Common myeloid progenitor, CD34-positive (primary cell): ENCODE measurements at regions of chr4 and their contacts with region 1.

Region 1: DNA sequence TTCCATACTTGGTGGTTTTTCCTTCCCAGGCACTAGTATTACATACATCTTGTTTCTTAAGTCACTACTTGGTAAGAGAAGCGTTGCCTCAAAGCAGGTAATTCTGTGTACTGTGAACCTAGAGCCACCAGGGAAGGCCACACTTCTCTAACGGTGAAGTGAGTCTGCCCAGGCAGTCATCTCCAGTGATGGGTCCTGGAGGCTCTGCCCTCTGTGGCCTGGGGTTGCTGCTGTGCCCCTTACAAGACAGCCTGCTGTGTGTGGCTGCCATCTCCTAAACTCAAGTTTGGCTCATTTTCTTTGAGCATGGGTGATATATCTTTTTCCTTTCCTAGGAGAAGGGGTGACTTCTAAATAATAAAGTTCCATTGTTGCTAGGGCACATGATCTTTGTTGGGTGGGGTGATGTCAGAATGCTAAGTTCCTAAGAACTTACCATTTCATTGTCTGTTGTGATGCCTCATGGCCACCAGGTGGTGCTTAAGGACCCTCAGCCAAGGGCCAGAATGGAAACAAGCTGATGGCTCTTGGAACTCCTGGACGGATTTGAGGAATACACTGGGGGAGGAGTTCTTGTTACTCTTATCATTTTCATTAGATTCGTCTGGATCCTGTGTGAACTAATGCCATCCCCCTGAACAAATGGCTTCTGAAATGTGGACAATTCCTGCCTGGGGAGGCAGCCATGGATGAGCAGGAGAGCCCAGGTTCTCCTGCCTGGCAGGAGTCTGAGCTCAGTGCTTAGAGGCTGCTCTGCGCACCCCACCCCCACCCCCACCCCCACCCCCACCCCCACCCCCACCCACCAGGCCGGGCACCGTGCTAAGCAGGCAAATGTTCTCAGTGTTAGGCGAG is 41.1 kb upstream of the WDR1 start:
- DNase-seq: peak; percentile 67 to 77 (median 75)
- H3K4me3 ChIP-seq: no peak overlapping the region
- H3K27ac ChIP-seq: no peak overlapping the region
- H3K4me1 ChIP-seq: peaks cover 0 to 7% (median 0%) of the 10 kb centered on the region in 4 experiments
- H3K27me3 ChIP-seq: no peaks in the 10 kb centered on the region

Region 2: GRCh38 chr4:10116580-10117358 is 40.9 kb before region 1 on chr4 and contains the start of gene WDR1:
- CTCF ChIA-PET with region 1: interaction called, 49 read pairs
- POLR2A ChIA-PET with region 1: interaction called, 3 read pairs
- DNase-seq: peak; percentile 88 to 96 (median 95)
- H3K4me3 ChIP-seq: peak within 1 kb of the TSS; percentile 72 to 89 (median 80)
- H3K27ac ChIP-seq: peak within 1 kb of the TSS; percentile 90 to 96
- H3K4me1 ChIP-seq: peaks cover 6 to 66% (median 52%) of the 10 kb centered on the region in 4 experiments
- H3K27me3 ChIP-seq: no peaks in the 10 kb centered on the region

Region 3: DNA sequence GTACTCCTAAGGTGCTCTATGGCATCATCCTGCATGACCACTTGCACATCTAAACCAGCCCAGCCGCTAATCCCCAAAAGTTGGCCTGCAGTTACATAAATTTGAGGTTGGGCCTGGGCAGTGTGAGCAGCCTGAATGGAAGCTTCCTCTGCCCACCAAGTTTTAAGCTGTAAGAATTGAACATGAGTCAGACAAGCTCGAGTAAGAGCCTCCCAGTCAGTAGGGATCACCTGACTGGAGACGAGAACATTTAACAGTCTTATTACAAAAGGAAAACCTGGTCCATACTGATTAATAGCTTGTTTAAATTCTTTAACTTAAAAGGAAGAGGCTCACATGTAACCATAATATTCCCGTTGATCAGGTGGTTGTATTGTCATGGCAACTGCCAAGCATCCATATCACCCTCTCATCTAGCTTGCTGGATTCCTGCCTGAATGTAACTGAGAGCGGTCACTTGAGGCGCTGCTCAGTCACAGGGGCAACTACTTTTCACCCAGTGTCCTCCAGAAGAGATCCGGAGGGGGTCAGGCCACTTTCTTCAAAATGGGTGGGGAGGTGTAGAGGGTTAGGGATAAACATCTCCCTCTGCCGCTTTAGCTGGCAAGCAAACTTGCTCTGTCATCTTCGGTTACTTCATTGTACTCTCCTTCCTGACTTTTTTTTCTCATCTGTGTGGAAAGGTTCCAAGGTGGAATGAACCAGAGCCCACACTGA is 15.5 kb after region 1 on chr4:
- CTCF ChIA-PET with region 1: interaction called, 177 read pairs
- POLR2A ChIA-PET with region 1: no interaction called
- DNase-seq: peak; percentile 77 to 91 (median 81)
- H3K4me3 ChIP-seq: no peak overlapping the region
- H3K27ac ChIP-seq: peak overlapping the region; percentile 1 to 75
- H3K4me1 ChIP-seq: peaks cover 0 to 29% (median 15%) of the 10 kb centered on the region in 4 experiments
- H3K27me3 ChIP-seq: no peaks in the 10 kb centered on the region

Region 4: DNA sequence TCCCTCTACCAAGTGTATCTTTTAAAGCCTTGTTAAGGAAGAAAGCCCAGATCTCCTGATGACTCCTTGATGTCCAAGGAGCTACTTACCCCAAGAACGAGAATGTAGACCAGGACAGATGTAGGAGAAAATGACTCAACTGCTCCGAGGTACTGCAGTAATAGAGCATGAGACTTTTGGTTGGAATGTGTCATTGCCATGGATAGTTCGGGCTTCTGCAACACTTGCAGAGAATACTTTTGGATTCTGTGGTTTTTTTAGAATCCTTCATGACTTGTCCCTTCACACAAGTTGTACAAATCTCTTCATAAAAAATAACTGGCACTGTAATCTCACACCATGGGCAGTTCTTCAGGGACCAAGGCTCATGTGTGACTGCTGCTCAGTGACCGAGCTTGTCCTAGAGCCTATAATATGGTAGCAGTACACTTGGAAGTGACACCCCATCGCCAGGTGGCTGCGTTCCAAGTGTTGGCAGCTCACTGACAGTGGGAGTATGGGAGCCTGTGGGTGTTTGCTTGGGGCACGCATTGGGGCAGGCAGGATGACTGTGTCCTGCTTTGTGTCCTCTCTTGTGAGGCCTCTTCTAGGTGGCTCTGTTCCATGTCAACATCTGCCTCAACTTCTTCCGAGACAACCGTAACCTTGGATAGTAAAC is 46.8 kb after region 1 on chr4:
- CTCF ChIA-PET with region 1: no interaction called
- POLR2A ChIA-PET with region 1: no interaction called
- DNase-seq: no peak
- H3K4me3 ChIP-seq: no peak overlapping the region
- H3K27ac ChIP-seq: no peak overlapping the region
- H3K4me1 ChIP-seq: no peaks in the 10 kb centered on the region
- H3K27me3 ChIP-seq: peaks cover 0 to 5% (median 0%) of the 10 kb centered on the region in 5 experiments

Region 5: GRCh38 chr4:10395971-10396580 is 238.4 kb after region 1 on chr4:
- CTCF ChIA-PET with region 1: interaction called, 211 read pairs
- POLR2A ChIA-PET with region 1: no interaction called
- DNase-seq: no peak
- H3K4me3 ChIP-seq: no peak overlapping the region
- H3K27ac ChIP-seq: no peak overlapping the region
- H3K4me1 ChIP-seq: no peaks in the 10 kb centered on the region
- H3K27me3 ChIP-seq: no peaks in the 10 kb centered on the region

Region 6: GRCh38 chr4:10403633-10404445 is 246.1 kb after region 1 on chr4:
- CTCF ChIA-PET with region 1: interaction called, 211 read pairs
- POLR2A ChIA-PET with region 1: interaction called, 6 read pairs
- DNase-seq: peak; percentile 56 to 77 (median 74)
- H3K4me3 ChIP-seq: no peak overlapping the region
- H3K27ac ChIP-seq: no peak overlapping the region
- H3K4me1 ChIP-seq: no peaks in the 10 kb centered on the region
- H3K27me3 ChIP-seq: no peaks in the 10 kb centered on the region

Region 7: DNA sequence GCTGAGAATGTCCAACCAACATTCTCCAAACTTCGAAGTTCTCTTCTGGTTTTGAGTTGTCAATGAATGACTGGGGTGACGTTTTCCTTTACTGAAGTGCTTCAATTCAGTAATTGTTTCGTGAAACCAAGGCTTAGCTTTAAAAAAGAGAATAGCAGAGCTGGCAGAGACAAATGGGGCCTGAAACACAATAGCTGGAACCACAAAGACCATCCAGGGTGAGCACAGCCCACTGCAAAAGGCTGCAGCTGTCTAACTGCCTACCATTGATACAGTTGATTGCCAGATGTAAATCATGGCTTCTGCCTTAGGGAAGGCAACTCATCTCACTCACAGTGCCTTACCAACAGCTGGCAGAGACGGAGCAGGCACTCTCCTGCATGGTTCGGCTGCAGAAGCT is 378.2 kb after region 1 on chr4:
- CTCF ChIA-PET with region 1: interaction called, 36 read pairs
- POLR2A ChIA-PET with region 1: no interaction called
- DNase-seq: no peak
- H3K4me3 ChIP-seq: no peak overlapping the region
- H3K27ac ChIP-seq: no peak overlapping the region
- H3K4me1 ChIP-seq: no peaks in the 10 kb centered on the region
- H3K27me3 ChIP-seq: no peaks in the 10 kb centered on the region

Region 8: GRCh38 chr4:10554694-10555093 is 397.0 kb after region 1 on chr4:
- CTCF ChIA-PET with region 1: interaction called, 32 read pairs
- POLR2A ChIA-PET with region 1: no interaction called
- DNase-seq: peak; percentile 63 to 83 (median 77)
- H3K4me3 ChIP-seq: peak overlapping the region in 2 of 7 experiments; percentile 8 to 23
- H3K27ac ChIP-seq: no peak overlapping the region
- H3K4me1 ChIP-seq: peaks cover 0 to 11% (median 0%) of the 10 kb centered on the region in 4 experiments
- H3K27me3 ChIP-seq: no peaks in the 10 kb centered on the region